Right cardiac atrium (tissue), 5 donors: ENCODE measurements at regions of chr1 and their contacts with region 1.

Region 1: GRCh38 chr1:210233216-210234020 is 822 bp downstream of the SERTAD4 start:
- DNase-seq: peak; percentile 63 to 78 (median 78)
- ATAC-seq: peak; percentile 45 to 56
- H3K4me3 ChIP-seq: peak overlapping the region; percentile 80
- H3K27ac ChIP-seq: peak overlapping the region; percentile 16
- H3K4me1 ChIP-seq: peaks cover 2% of the 10 kb centered on the region
- H3K27me3 ChIP-seq: no peaks in the 10 kb centered on the region

Region 2: DNA sequence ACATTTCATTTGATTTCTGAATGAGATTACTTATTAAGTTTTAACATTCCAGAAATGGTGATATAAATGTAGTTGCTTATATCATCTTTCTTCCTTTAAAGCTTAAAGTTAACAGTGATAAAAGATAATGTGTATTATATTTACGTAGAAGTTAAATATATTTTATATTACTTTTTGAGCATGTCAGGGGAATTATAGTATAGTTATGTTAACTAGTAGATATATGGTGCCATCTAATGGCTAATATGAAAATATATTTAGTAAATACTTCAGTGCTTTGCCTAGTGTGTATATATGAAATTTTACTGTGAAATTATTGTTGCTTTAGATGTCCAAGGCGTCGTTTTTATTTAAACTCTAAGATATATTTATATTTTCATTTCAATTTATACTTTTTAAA is 243.9 kb before region 1 on chr1:
- intact Hi-C with region 1: no loop called
- DNase-seq: no peak
- ATAC-seq: no peak
- H3K4me3 ChIP-seq: no peak overlapping the region
- H3K27ac ChIP-seq: no peak overlapping the region
- H3K4me1 ChIP-seq: no peaks in the 10 kb centered on the region
- H3K27me3 ChIP-seq: no peaks in the 10 kb centered on the region

Region 3: GRCh38 chr1:210292231-210292871 is 58.9 kb after region 1 on chr1:
- intact Hi-C with region 1: loop called in 2 of 4 experiments (anchors 5 to 10 kb)
- DNase-seq: peak; percentile 59 to 86 (median 84)
- ATAC-seq: peak; percentile 56 to 72
- H3K4me3 ChIP-seq: peak overlapping the region; percentile 47
- H3K27ac ChIP-seq: peak overlapping the region; percentile 13
- H3K4me1 ChIP-seq: peaks cover 2% of the 10 kb centered on the region
- H3K27me3 ChIP-seq: no peaks in the 10 kb centered on the region